Activated CD4-positive, alpha-beta memory T cell treated with anti-CD3 and anti-CD28 coated beads for 36 hours (primary cell): ENCODE measurements at regions of chr1 and their contacts with region 1.

Region 1: GRCh38 chr1:197924516-197925123 is 7.4 kb downstream of the LHX9 start:
- DNase-seq: peak; percentile 45
- H3K4me3 Mint-ChIP-seq: no peak overlapping the region
- H3K27ac Mint-ChIP-seq: no peak overlapping the region
- H3K4me1 Mint-ChIP-seq: peaks cover 20% of the 10 kb centered on the region
- H3K27me3 Mint-ChIP-seq: peaks cover 56% of the 10 kb centered on the region

Region 2: DNA sequence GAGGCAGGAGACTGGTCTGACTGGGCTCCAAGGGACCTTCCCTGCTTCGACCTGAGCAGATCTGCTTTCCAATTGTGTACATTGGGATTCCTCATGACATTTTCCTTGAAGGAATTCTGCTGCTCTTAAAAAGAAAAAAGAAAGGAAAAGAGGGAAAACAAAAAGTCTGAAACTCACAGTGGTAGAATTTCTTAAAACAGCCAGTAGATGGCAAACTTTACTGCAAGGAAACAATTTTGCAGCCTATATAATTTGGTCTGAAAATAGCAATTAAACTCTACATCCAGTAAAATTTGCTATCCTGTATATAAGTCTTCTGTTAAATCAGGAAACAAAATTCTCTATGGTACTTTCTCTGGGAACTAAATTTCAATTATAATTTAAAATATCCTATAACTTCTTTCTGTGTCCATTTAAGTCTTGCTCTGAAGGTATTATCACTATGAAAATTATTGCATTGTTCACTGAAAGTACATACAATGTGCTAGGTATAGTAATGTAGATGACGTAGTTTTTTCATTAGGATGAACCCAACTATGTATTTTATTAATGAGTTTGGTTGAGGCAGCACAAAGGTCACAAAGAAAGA is 596.8 kb before region 1 on chr1:
- CTCF ChIA-PET with region 1: no interaction called
- POLR2A ChIA-PET with region 1: no interaction called
- intact Hi-C with region 1: loop called (anchors 10 kb)
- DNase-seq: no peak
- H3K4me3 Mint-ChIP-seq: no peak overlapping the region
- H3K27ac Mint-ChIP-seq: no peak overlapping the region
- H3K4me1 Mint-ChIP-seq: no peaks in the 10 kb centered on the region
- H3K27me3 Mint-ChIP-seq: no peaks in the 10 kb centered on the region

Region 3: GRCh38 chr1:197614916-197615692 is 309.5 kb before region 1 on chr1:
- CTCF ChIA-PET with region 1: interaction called, 5 read pairs
- POLR2A ChIA-PET with region 1: no interaction called
- intact Hi-C with region 1: loop called (anchors 1 kb)
- DNase-seq: peak; percentile 38
- H3K4me3 Mint-ChIP-seq: no peak overlapping the region
- H3K27ac Mint-ChIP-seq: no peak overlapping the region
- H3K4me1 Mint-ChIP-seq: peaks cover 1% of the 10 kb centered on the region
- H3K27me3 Mint-ChIP-seq: no peaks in the 10 kb centered on the region

Region 4: DNA sequence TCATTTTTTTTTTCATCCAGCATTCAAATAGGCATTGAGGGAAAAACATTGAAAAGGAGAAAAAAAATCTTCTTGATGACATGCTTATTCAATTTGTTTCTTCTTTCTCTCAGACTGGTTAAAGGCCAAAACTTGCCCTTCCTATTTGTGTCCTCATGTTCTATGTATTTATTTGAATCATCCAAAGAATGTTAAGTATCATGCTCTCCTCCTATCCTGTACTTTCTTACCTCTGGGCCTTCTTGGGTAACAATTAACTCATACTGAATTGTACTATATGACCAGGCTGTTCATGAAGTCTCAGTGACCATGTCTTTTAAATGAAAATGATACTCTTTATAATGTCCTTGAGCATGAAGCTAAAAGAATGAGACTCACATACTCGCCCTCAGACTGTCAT is 112.9 kb before region 1 on chr1:
- CTCF ChIA-PET with region 1: no interaction called
- POLR2A ChIA-PET with region 1: no interaction called
- intact Hi-C with region 1: no loop called
- DNase-seq: no peak
- H3K4me3 Mint-ChIP-seq: no peak overlapping the region
- H3K27ac Mint-ChIP-seq: no peak overlapping the region
- H3K4me1 Mint-ChIP-seq: no peaks in the 10 kb centered on the region
- H3K27me3 Mint-ChIP-seq: no peaks in the 10 kb centered on the region

Region 5: GRCh38 chr1:197908716-197909220 is 15.9 kb before region 1 on chr1:
- CTCF ChIA-PET with region 1: interaction called, 22 read pairs
- POLR2A ChIA-PET with region 1: no interaction called
- intact Hi-C with region 1: no loop called
- DNase-seq: no peak
- H3K4me3 Mint-ChIP-seq: peak overlapping the region; percentile 31
- H3K27ac Mint-ChIP-seq: no peak overlapping the region
- H3K4me1 Mint-ChIP-seq: peaks cover 48% of the 10 kb centered on the region
- H3K27me3 Mint-ChIP-seq: peaks cover 89% of the 10 kb centered on the region

Region 6: GRCh38 chr1:197985348-197985747 is 60.7 kb after region 1 on chr1:
- CTCF ChIA-PET with region 1: no interaction called
- POLR2A ChIA-PET with region 1: no interaction called
- intact Hi-C with region 1: no loop called
- DNase-seq: no peak
- H3K4me3 Mint-ChIP-seq: no peak overlapping the region
- H3K27ac Mint-ChIP-seq: no peak overlapping the region
- H3K4me1 Mint-ChIP-seq: no peaks in the 10 kb centered on the region
- H3K27me3 Mint-ChIP-seq: peaks cover 1% of the 10 kb centered on the region

Region 7: DNA sequence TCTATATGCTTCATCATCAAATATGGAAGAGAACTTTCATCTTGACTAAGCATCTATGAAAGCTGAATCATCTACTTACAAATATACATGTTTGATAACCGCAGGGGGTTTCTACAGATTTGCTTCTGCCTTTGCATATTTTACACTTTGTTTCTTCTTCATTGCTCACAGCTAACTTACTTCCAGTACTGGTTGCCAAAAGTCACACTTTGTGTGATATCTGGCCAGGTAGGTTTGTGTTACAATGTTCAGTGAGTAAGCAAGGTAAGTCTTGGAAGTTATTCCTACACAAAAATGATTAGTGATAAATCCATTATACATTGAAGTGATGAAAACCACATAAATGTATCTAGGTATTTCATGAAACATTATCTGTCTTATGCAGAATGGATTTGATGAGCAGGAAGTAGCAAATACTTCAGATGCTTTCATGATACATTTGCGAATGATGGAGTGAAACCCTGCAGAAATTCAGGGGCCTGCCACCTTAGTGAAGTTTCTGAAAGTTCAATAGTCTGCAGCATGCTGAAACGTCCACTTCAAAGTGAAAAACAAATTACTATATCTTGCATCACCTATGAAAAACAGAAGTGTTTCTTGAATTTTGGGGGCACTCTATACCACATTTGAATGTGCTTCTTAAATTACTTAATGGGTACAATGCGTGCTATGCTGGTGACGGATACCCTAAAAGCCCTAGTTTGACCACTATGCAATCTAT is 428.5 kb after region 1 on chr1:
- CTCF ChIA-PET with region 1: no interaction called
- POLR2A ChIA-PET with region 1: no interaction called
- intact Hi-C with region 1: loop called (anchors 5 kb)
- DNase-seq: no peak
- H3K4me3 Mint-ChIP-seq: no peak overlapping the region
- H3K27ac Mint-ChIP-seq: no peak overlapping the region
- H3K4me1 Mint-ChIP-seq: peaks cover 13% of the 10 kb centered on the region
- H3K27me3 Mint-ChIP-seq: peaks cover 3% of the 10 kb centered on the region

Region 8: GRCh38 chr1:198363625-198364151 is 439.1 kb after region 1 on chr1:
- CTCF ChIA-PET with region 1: no interaction called
- POLR2A ChIA-PET with region 1: no interaction called
- intact Hi-C with region 1: no loop called
- DNase-seq: no peak
- H3K4me3 Mint-ChIP-seq: no peak overlapping the region
- H3K27ac Mint-ChIP-seq: no peak overlapping the region
- H3K4me1 Mint-ChIP-seq: peaks cover 12% of the 10 kb centered on the region
- H3K27me3 Mint-ChIP-seq: no peaks in the 10 kb centered on the region